Psoas muscle (tissue), 8 donors: ENCODE measurements at regions of chr15 and their contacts with region 1.

Region 1: GRCh38 chr15:69735121-69735520 is 282.5 kb downstream of the RPLP1 start:
- DNase-seq: no peak
- ATAC-seq: no peak
- H3K4me3 ChIP-seq: no peak overlapping the region
- H3K27ac ChIP-seq: no peak overlapping the region
- H3K4me1 ChIP-seq: no peaks in the 10 kb centered on the region
- H3K27me3 ChIP-seq: peaks cover 0 to 1% (median 0%) of the 10 kb centered on the region in 3 donors
- CTCF ChIP-seq: no peak

Region 2: DNA sequence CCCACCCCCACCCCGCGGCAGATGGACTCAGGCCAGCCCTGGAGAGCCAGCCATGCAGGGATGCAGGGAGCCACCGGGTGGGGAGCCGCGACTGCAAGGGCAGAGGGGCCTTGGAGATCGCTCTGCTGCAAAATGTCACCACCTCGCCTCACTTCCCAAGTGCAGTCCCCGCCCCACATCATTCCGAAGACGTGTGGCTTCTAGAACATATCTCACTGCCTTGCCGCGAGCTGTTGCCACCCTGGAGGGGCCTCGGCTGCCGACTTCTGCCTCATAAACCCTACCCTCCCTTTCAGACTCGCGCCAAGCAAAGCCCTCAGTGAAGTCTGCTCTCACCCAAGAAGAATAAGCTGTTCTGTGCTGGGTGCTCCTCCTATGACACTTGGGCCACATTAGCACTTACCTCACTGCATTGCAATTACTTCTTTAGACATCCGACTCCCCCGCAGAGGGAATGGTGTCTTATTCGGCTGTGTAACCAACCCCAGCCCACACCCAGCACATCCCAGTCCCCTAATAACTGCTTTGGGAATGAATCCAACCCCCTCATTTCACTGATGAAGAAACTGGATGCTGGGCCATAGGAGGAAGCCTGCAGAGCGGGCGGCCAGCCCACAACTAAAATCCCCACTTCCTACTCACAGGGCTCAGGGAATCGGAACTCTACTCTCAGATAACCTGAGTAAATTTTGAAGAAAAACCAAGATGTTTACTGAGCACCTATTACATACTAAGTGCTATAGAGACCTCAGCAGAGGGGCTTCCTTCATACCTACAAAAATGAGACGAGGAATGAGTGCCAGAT is 354.0 kb after region 1 on chr15:
- intact Hi-C with region 1: loop called in 1 of 2 experiments (anchors 10 kb)
- DNase-seq: peak; percentile 44 to 61
- ATAC-seq: peak; percentile 80 to 94 (median 93)
- H3K4me3 ChIP-seq: peak overlapping the region; percentile 41
- H3K27ac ChIP-seq: peak overlapping the region; percentile 74
- H3K4me1 ChIP-seq: peaks cover 49% of the 10 kb centered on the region
- H3K27me3 ChIP-seq: no peaks in the 10 kb centered on the region
- CTCF ChIP-seq: no peak

Region 3: GRCh38 chr15:70636540-70637165 is 901.5 kb after region 1 on chr15:
- intact Hi-C with region 1: no loop called
- DNase-seq: no peak
- ATAC-seq: no peak
- H3K4me3 ChIP-seq: no peak overlapping the region
- H3K27ac ChIP-seq: no peak overlapping the region
- H3K4me1 ChIP-seq: no peaks in the 10 kb centered on the region
- H3K27me3 ChIP-seq: no peaks in the 10 kb centered on the region
- CTCF ChIP-seq: no peak